Panc1 (cell line): ENCODE measurements at regions of chr7 and their contacts with region 1.

Region 1: GRCh38 chr7:47852330-47853245 is 95.7 kb downstream of the PKD1L1 start:
- DNase-seq: no peak
- ATAC-seq: peak; percentile 92
- H3K4me3 ChIP-seq: no peak overlapping the region
- H3K27ac ChIP-seq: peak overlapping the region; percentile 35; the same call in 1 of the 2 replicates
- H3K4me1 ChIP-seq: no peaks in the 10 kb centered on the region
- H3K27me3 ChIP-seq: no peaks in the 10 kb centered on the region
- CTCF ChIP-seq: peak; percentile 80

Region 2: GRCh38 chr7:47757921-47758411 is 94.6 kb before region 1 on chr7:
- CTCF ChIA-PET with region 1: no interaction called
- POLR2A ChIA-PET with region 1: no interaction called
- in situ Hi-C with region 1: no loop called
- intact Hi-C with region 1: no loop called
- DNase-seq: no peak
- ATAC-seq: peak; percentile 47; the same call in 1 of the 2 replicates
- H3K4me3 ChIP-seq: no peak overlapping the region
- H3K27ac ChIP-seq: peak overlapping the region; percentile 100
- H3K4me1 ChIP-seq: peaks cover 24% of the 10 kb centered on the region
- H3K27me3 ChIP-seq: no peaks in the 10 kb centered on the region
- CTCF ChIP-seq: no peak

Region 3: DNA sequence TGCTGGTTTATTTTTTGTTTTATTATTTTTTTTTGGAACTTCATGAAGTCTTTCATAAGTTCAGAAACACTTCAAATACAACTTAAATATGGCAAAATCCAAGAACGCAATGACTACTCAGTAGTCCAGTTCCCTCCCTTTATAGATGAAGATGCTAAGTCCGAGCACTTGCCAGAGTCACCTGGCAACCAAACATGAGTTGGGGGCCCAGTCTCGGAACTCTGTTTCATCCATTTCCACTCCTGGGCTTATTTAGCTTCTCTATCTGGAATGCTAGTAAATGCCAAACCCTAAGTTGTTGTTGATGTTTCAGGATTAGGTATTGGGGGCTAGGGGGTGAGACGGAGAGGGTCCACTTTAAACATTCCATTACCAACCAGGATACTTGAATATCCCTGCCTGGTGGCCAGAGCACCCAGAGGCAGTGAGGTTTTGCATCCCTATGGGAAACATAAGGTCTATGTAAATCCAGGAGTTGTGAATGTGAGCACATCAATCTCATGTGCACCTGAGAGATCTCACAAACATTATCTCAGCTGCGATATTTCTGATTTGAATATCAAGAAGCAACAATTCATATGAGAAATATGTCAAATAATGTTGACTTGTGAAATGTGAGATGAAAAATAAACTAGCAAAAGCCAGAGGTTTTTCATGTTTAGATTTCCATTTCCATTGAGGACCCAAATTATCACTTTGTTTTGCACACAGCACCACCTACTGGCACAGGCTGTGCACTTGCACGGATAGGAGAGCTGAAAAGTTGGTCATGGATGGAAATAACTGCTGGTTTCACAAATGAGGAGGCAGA is 33.6 kb before region 1 on chr7:
- CTCF ChIA-PET with region 1: no interaction called
- POLR2A ChIA-PET with region 1: no interaction called
- in situ Hi-C with region 1: no loop called
- intact Hi-C with region 1: no loop called
- DNase-seq: peak; percentile 82
- ATAC-seq: peak; percentile 90
- H3K4me3 ChIP-seq: no peak overlapping the region
- H3K27ac ChIP-seq: peak overlapping the region; percentile 96
- H3K4me1 ChIP-seq: peaks cover 48% of the 10 kb centered on the region
- H3K27me3 ChIP-seq: no peaks in the 10 kb centered on the region
- CTCF ChIP-seq: peak; percentile 96

Region 4: GRCh38 chr7:47937065-47937683 is 84.6 kb after region 1 on chr7:
- CTCF ChIA-PET with region 1: interaction called, 3 read pairs
- POLR2A ChIA-PET with region 1: no interaction called
- in situ Hi-C with region 1: no loop called
- intact Hi-C with region 1: loop called (anchors 5 kb)
- DNase-seq: no peak
- ATAC-seq: 0 out of 2 replicates have a peak, but pooled peaks have one; percentile 8
- H3K4me3 ChIP-seq: no peak overlapping the region
- H3K27ac ChIP-seq: peak overlapping the region; percentile 86
- H3K4me1 ChIP-seq: peaks cover 50% of the 10 kb centered on the region
- H3K27me3 ChIP-seq: no peaks in the 10 kb centered on the region
- CTCF ChIP-seq: no peak

Region 5: DNA sequence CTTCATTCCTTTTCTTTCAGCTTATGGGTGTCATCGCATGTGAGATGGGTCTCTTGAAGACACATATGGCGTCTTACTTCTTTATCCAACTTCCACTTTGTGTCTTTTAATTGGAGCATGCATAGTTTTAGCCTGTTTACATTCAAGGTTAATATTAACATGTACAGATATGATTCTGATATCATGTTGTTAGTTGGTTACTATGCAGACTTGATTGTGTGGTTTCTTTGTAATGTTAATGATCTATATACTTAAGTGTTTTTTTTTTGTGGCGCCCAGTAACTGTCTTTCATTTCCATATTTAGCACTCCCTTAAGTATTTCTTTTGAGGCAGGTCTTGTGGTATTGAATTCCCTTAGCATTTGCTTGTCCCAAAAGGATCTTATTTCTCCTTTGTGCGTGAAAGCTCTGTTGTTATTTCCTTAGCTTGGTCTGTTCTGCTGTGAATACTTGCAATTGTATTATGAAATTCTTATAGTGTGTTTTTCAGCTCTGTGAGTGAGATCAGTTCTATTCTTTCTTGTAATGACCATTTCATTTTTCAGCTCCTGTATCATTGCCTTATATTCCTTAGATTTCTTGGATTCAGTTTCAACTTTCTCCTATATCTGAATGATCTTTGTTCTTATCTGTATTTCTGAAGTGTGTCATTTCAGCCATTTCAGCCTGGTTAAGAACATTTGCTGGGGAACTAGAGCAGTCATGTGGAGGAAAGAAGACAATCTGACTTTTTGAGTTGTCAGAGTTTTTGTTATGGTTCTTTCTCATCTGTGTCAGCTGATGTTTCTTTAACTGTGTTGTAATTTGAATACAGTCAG is 407.1 kb after region 1 on chr7:
- CTCF ChIA-PET with region 1: interaction called, 13 read pairs
- POLR2A ChIA-PET with region 1: no interaction called
- in situ Hi-C with region 1: no loop called
- intact Hi-C with region 1: no loop called
- DNase-seq: no peak
- ATAC-seq: no peak
- H3K4me3 ChIP-seq: no peak overlapping the region
- H3K27ac ChIP-seq: no peak overlapping the region
- H3K4me1 ChIP-seq: no peaks in the 10 kb centered on the region
- H3K27me3 ChIP-seq: no peaks in the 10 kb centered on the region
- CTCF ChIP-seq: no peak